H1 (cell line): ENCODE measurements at regions of chr2 and their contacts with region 1.

Region 1: GRCh38 chr2:225002039-225002655 is 40.1 kb downstream of the DOCK10 start:
- DNase-seq: peak in 1 of 2 experiments; percentile 57
- H3K4me3 ChIP-seq: no peak overlapping the region
- H3K27ac ChIP-seq: no peak overlapping the region
- H3K4me1 ChIP-seq: no peaks in the 10 kb centered on the region; a peak in 2 of 7 replicates
- H3K27me3 ChIP-seq: no peaks in the 10 kb centered on the region
- CTCF ChIP-seq: peak in 2 of 3 experiments; percentile 62 to 89; a peak in 3 of 4 replicates
- EP300 ChIP-seq: no peak
- POLR2A ChIP-seq: no peak
- RAD21 ChIP-seq: peak; percentile 86

Region 2: GRCh38 chr2:224847961-224848850 is 153.9 kb before region 1 on chr2:
- CTCF ChIA-PET with region 1: interaction called, 21 read pairs
- POLR2A ChIA-PET with region 1: no interaction called
- DNase-seq: no peak
- H3K4me3 ChIP-seq: no peak overlapping the region
- H3K27ac ChIP-seq: no peak overlapping the region
- H3K4me1 ChIP-seq: no peaks in the 10 kb centered on the region
- H3K27me3 ChIP-seq: no peaks in the 10 kb centered on the region
- CTCF ChIP-seq: no peak
- EP300 ChIP-seq: no peak
- POLR2A ChIP-seq: no peak
- RAD21 ChIP-seq: no peak

Region 3: DNA sequence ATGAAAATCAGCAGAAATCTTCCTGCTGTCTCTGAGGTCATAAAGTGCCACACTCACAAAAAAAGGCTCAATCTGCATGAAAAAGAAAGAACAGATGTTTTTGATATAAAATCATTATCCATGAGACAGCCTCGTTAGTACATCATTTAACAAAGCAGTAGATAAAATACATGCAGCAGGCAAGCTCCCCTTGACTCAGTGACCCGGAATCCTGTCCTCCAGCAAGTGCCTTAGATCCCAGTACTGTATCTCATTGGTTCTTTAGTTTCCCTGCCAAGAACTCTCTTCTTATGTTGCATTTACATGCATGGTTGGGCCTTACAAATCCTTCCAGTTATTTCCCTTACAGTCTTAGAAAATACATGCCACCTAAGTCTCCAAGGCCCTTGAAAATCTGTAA is 137.1 kb before region 1 on chr2:
- CTCF ChIA-PET with region 1: no interaction called
- POLR2A ChIA-PET with region 1: no interaction called
- DNase-seq: no peak
- H3K4me3 ChIP-seq: no peak overlapping the region
- H3K27ac ChIP-seq: no peak overlapping the region
- H3K4me1 ChIP-seq: no peaks in the 10 kb centered on the region
- H3K27me3 ChIP-seq: no peaks in the 10 kb centered on the region
- CTCF ChIP-seq: no peak
- EP300 ChIP-seq: no peak
- POLR2A ChIP-seq: no peak
- RAD21 ChIP-seq: no peak

Region 4: GRCh38 chr2:224930990-224931389 is 71.2 kb before region 1 on chr2:
- CTCF ChIA-PET with region 1: interaction called, 35 read pairs
- POLR2A ChIA-PET with region 1: no interaction called
- DNase-seq: no peak
- H3K4me3 ChIP-seq: no peak overlapping the region
- H3K27ac ChIP-seq: no peak overlapping the region
- H3K4me1 ChIP-seq: peaks cover 0 to 3% (median 1%) of the 10 kb centered on the region in 4 experiments; a peak in 1 of 7 replicates
- H3K27me3 ChIP-seq: no peaks in the 10 kb centered on the region
- CTCF ChIP-seq: peak in 2 of 3 experiments; percentile 42 to 44; a peak in 3 of 4 replicates
- EP300 ChIP-seq: no peak
- POLR2A ChIP-seq: no peak
- RAD21 ChIP-seq: peak; percentile 71 to 76

Region 5: DNA sequence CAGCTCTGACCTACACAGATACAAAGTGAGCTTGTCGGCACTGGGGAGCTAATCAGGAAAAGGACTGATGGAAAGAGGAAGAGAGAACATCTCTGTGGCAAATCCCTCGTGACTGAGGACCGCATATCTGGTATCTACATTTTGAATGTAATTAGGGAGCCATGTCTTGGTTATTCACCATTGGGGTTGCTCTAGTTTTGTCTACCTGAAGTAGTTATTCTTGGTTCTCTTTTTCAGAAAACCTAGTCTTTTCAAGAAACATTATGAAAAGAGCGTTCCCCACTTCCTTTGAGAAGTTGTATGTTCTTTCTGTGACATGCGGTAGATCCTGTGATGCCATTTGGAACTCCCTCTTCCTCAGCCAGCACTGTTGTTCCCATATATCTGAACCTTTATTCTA is 64.3 kb before region 1 on chr2:
- CTCF ChIA-PET with region 1: interaction called, 35 read pairs
- POLR2A ChIA-PET with region 1: no interaction called
- DNase-seq: no peak
- H3K4me3 ChIP-seq: no peak overlapping the region
- H3K27ac ChIP-seq: no peak overlapping the region
- H3K4me1 ChIP-seq: peaks cover 2 to 14% (median 6%) of the 10 kb centered on the region in 4 experiments; a peak in 5 of 7 replicates
- H3K27me3 ChIP-seq: no peaks in the 10 kb centered on the region
- CTCF ChIP-seq: no peak
- EP300 ChIP-seq: no peak
- POLR2A ChIP-seq: no peak
- RAD21 ChIP-seq: no peak

Region 6: GRCh38 chr2:224982910-224983711 is 19.0 kb before region 1 on chr2:
- CTCF ChIA-PET with region 1: interaction called, 45 read pairs
- POLR2A ChIA-PET with region 1: no interaction called
- DNase-seq: no peak
- H3K4me3 ChIP-seq: no peak overlapping the region
- H3K27ac ChIP-seq: no peak overlapping the region
- H3K4me1 ChIP-seq: no peaks in the 10 kb centered on the region
- H3K27me3 ChIP-seq: no peaks in the 10 kb centered on the region
- CTCF ChIP-seq: no peak
- EP300 ChIP-seq: no peak
- POLR2A ChIP-seq: no peak
- RAD21 ChIP-seq: no peak

Region 7: GRCh38 chr2:225033440-225034318 is 31.5 kb after region 1 on chr2:
- CTCF ChIA-PET with region 1: no interaction called
- POLR2A ChIA-PET with region 1: no interaction called
- DNase-seq: no peak
- H3K4me3 ChIP-seq: no peak overlapping the region
- H3K27ac ChIP-seq: no peak overlapping the region
- H3K4me1 ChIP-seq: 0 out of 7 replicates have a peak, but pooled peaks cover 0 to 3% (median 0%) of the 10 kb centered on the region in 4 experiments
- H3K27me3 ChIP-seq: no peaks in the 10 kb centered on the region
- CTCF ChIP-seq: no peak
- EP300 ChIP-seq: no peak
- POLR2A ChIP-seq: no peak
- RAD21 ChIP-seq: no peak